ENCODE measurements at regions of chr16 and their contacts with region 1.

Region 1: DNA sequence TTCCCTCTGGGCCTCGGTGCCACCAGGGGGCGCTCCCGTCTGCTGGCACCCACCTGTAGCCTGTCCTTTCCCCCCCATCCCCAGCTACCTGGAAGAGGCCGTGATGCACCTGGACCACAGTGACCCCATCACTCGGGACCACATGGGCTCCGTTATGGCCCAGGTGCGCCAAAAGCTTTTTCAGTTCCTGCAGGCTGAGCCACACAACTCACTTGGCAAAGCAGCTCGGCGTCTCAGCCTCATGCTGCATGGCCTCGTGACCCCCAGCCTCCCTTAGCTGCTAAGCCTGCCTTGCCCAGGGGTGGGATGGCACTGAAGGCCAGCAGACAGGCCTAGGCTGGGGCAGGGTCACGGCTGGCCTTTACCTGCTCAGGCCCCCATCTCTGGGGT is 818 bp upstream of the NRN1L start:
- DNase-seq: peak; percentile 80
- H3K4me3 Mint-ChIP-seq: no peak overlapping the region
- H3K27ac Mint-ChIP-seq: peak overlapping the region; percentile 45
- H3K4me1 Mint-ChIP-seq: no peaks in the 10 kb centered on the region
- H3K27me3 Mint-ChIP-seq: no peaks in the 10 kb centered on the region

Region 2: GRCh38 chr16:67760206-67760955 is 123.5 kb before region 1 on chr16:
- CTCF ChIA-PET with region 1: no interaction called
- DNase-seq: no peak
- H3K4me3 Mint-ChIP-seq: no peak overlapping the region
- H3K27ac Mint-ChIP-seq: peak overlapping the region; percentile 70
- H3K4me1 Mint-ChIP-seq: peaks cover 19% of the 10 kb centered on the region
- H3K27me3 Mint-ChIP-seq: no peaks in the 10 kb centered on the region

Region 3: GRCh38 chr16:67865316-67865715 is 18.6 kb before region 1 on chr16:
- CTCF ChIA-PET with region 1: interaction called, 16 read pairs
- DNase-seq: peak; percentile 52
- H3K4me3 Mint-ChIP-seq: no peak overlapping the region
- H3K27ac Mint-ChIP-seq: no peak overlapping the region
- H3K4me1 Mint-ChIP-seq: no peaks in the 10 kb centered on the region
- H3K27me3 Mint-ChIP-seq: no peaks in the 10 kb centered on the region

Region 4: DNA sequence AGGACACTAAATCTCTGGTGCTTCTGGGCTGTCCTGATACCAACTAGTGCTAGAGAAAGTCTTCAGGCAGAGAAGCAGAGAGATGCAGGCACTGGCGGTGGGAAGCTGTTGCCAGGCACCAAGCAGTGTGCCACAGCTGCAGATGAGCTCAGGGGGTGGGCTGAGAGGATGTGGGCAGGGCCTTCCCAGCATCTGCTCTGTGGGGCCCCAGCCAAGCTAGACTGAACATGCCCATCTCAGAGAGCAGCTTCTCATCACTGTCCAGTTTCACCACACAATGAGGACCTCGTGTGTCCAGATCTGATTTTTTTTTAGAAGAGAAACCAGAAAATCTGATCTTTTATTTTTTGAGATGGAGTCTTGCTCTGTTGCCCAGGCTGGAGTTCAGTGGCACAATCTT is 26.3 kb after region 1 on chr16:
- CTCF ChIA-PET with region 1: interaction called, 39 read pairs
- DNase-seq: peak; percentile 55
- H3K4me3 Mint-ChIP-seq: no peak overlapping the region
- H3K27ac Mint-ChIP-seq: no peak overlapping the region
- H3K4me1 Mint-ChIP-seq: peaks cover 21% of the 10 kb centered on the region
- H3K27me3 Mint-ChIP-seq: no peaks in the 10 kb centered on the region

Region 5: DNA sequence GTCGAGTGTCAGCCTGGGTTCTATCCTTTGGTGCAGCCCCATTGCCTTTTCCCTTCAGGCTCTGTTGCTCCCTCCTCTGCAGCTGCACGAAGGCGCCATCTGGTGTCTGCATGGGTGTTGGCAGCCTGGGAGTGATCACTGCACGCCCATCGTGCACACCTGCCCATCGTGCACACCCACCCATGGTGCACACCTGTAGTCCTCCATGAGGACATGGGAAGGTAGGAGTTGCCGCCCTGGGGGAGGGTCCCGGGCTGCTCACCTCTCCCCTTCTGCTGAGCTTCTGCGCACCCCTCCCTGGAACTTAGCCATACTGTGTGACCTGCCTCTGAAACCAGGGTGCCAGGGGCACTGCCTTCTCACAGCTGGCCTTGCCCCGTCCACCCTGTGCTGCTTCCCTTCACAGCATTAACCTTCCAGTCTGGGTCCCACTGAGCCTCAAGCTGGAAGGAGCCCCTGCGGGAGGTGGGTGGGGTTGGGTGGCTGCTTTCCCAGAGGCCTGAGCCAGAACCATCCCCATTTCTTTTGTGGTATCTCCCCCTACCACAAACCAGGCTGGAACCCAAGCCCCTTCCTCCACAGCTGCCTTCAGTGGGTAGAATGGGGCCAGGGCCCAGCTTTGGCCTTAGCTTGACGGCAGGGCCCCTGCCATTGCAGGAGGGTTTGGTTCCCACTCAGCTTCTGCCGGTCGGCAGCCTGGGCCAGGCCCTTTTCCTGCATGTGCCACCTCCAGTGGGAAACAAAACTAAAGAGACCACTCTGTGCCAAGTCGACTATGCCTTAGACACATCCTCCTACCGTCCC is 44.9 kb after region 1 on chr16:
- CTCF ChIA-PET with region 1: interaction called, 49 read pairs
- DNase-seq: peak; percentile 88
- H3K4me3 Mint-ChIP-seq: no peak overlapping the region
- H3K27ac Mint-ChIP-seq: peak overlapping the region; percentile 58
- H3K4me1 Mint-ChIP-seq: peaks cover 4% of the 10 kb centered on the region
- H3K27me3 Mint-ChIP-seq: no peaks in the 10 kb centered on the region

Region 6: GRCh38 chr16:67942200-67942509 is 58.3 kb after region 1 on chr16:
- CTCF ChIA-PET with region 1: interaction called, 17 read pairs
- DNase-seq: peak; percentile 56
- H3K4me3 Mint-ChIP-seq: no peak overlapping the region
- H3K27ac Mint-ChIP-seq: peak overlapping the region; percentile 80
- H3K4me1 Mint-ChIP-seq: peaks cover 37% of the 10 kb centered on the region
- H3K27me3 Mint-ChIP-seq: no peaks in the 10 kb centered on the region

Measured in activated naive CD4-positive, alpha-beta T cell treated with anti-CD3 and anti-CD28 coated beads, Interleukin-2, amount 10 ng/mL, durations not matched to agents 7 days and 5 days (primary cell).